ENCODE measurements at regions of chr6 and their contacts with region 1.

Region 1: DNA sequence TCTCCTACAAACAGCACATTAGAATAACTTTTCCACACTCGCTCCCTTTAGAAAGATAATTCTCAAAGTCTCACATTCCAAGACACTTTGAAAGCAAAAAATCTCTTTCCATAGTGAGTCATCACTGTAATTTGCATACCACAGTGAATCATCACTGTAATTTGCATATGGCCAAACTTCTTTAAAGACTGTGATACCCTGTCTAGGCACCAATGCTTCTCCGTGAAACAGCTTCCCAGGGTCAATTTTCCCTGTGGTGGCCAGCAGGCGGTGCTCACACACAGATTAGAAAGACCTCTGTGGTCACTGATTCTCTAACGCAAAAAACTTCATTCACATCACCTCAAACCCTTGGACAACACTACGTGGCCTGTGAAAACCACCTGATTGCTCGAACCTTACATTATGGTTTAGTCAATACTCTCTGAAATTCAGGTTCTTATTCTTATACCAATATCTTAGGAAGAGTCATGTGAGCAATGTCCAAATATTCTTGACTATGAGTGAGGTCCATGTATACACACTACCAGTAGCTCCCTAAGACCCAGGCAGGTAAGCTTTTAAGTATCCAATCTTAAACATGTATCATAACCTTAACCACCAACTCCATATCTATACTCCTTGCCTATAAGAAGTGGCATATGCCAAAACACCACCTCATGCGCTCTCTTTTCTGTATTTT is 78.5 kb upstream of the PHACTR1 start:
- DNase-seq: peak; percentile 66
- H3K4me3 Mint-ChIP-seq: no peak overlapping the region
- H3K27ac Mint-ChIP-seq: peak overlapping the region; percentile 19
- H3K4me1 Mint-ChIP-seq: peaks cover 8% of the 10 kb centered on the region
- H3K27me3 Mint-ChIP-seq: peaks cover 23% of the 10 kb centered on the region
- CTCF ChIP-seq: peak; percentile 56

Region 2: GRCh38 chr6:12555267-12555666 is 82.8 kb before region 1 on chr6:
- CTCF ChIA-PET with region 1: no interaction called
- intact Hi-C with region 1: no loop called
- DNase-seq: no peak
- H3K4me3 Mint-ChIP-seq: no peak overlapping the region
- H3K27ac Mint-ChIP-seq: no peak overlapping the region
- H3K4me1 Mint-ChIP-seq: peaks cover 15% of the 10 kb centered on the region
- H3K27me3 Mint-ChIP-seq: no peaks in the 10 kb centered on the region
- CTCF ChIP-seq: no peak

Region 3: DNA sequence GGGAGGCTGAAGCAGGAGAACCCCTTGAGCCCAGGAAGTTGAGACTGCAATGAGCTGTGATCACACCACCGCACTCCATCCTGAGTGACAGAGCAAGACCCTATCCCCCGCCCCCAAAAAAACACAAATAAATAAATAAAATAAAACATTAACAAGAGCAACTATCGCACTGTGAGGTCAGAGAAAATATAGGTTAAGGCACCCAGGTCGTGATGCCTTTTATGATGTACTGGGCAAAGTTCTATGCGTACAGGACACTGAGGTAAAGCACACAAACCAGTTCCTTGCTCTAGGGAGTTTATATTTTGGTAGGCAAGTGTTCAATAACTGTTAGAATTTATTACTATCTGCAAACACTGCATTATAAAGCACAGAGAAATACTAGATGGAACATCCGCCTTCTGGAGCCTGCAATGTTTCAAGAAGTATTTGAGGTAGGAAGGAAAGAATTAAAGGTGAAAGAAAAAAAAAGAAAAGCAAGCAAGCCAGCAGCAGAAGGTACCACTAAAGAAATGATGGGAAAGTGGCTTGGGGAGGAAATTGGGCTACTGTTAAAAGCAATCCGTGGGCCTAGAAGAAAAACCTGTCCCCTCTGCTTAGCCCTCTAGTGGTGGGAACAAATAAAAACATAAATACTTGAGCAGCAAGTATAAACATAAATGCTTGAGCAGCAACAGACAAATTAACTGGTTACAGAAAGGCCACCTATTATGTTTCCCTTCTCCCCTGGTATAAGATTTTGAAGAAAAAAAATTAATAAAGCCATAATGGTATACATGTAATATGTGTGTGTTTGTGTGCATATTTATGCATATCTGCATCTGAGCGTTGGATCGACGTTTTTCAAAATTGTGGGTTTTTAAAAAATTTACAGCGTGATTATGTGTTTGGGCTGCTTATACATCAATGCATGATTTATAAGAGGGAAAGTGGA is 206.5 kb after region 1 on chr6:
- CTCF ChIA-PET with region 1: no interaction called
- intact Hi-C with region 1: loop called (anchors 2 kb)
- DNase-seq: no peak
- H3K4me3 Mint-ChIP-seq: no peak overlapping the region
- H3K27ac Mint-ChIP-seq: no peak overlapping the region
- H3K4me1 Mint-ChIP-seq: peaks cover 4% of the 10 kb centered on the region
- H3K27me3 Mint-ChIP-seq: peaks cover 12% of the 10 kb centered on the region
- CTCF ChIP-seq: no peak

Region 4: GRCh38 chr6:12895721-12896120 is 257.6 kb after region 1 on chr6:
- CTCF ChIA-PET with region 1: interaction called, 9 read pairs
- intact Hi-C with region 1: loop called (anchors 2 kb)
- DNase-seq: no peak
- H3K4me3 Mint-ChIP-seq: no peak overlapping the region
- H3K27ac Mint-ChIP-seq: no peak overlapping the region
- H3K4me1 Mint-ChIP-seq: no peaks in the 10 kb centered on the region
- H3K27me3 Mint-ChIP-seq: peaks cover 80% of the 10 kb centered on the region
- CTCF ChIP-seq: no peak

Region 5: GRCh38 chr6:13068586-13069210 is 430.6 kb after region 1 on chr6:
- CTCF ChIA-PET with region 1: no interaction called
- intact Hi-C with region 1: no loop called
- DNase-seq: no peak
- H3K4me3 Mint-ChIP-seq: no peak overlapping the region
- H3K27ac Mint-ChIP-seq: no peak overlapping the region
- H3K4me1 Mint-ChIP-seq: no peaks in the 10 kb centered on the region
- H3K27me3 Mint-ChIP-seq: peaks cover 31% of the 10 kb centered on the region
- CTCF ChIP-seq: no peak

Measured in Calu3 (cell line).